GM12878 (cell line): ENCODE measurements at regions of chr6 and their contacts with region 1.

Region 1: GRCh38 chr6:43506667-43507471 is 3.3 kb downstream of the LRRC73 start:
- DNase-seq: peak; percentile 51
- ATAC-seq: peak; percentile 87
- H3K4me3 ChIP-seq: no peak overlapping the region
- H3K27ac ChIP-seq: no peak overlapping the region
- H3K4me1 ChIP-seq: peaks cover 4% of the 10 kb centered on the region; the same call in 1 of the 2 replicates
- H3K27me3 ChIP-seq: peaks cover 0 to 2% of the 10 kb centered on the region in 2 experiments; a peak in 1 of 4 replicates
- CTCF ChIP-seq: peak; percentile 91 to 97 (median 96); a peak in 5 of 6 replicates
- EP300 ChIP-seq: no peak
- POLR2A ChIP-seq: no peak
- RAD21 ChIP-seq: peak; percentile 80

Region 2: DNA sequence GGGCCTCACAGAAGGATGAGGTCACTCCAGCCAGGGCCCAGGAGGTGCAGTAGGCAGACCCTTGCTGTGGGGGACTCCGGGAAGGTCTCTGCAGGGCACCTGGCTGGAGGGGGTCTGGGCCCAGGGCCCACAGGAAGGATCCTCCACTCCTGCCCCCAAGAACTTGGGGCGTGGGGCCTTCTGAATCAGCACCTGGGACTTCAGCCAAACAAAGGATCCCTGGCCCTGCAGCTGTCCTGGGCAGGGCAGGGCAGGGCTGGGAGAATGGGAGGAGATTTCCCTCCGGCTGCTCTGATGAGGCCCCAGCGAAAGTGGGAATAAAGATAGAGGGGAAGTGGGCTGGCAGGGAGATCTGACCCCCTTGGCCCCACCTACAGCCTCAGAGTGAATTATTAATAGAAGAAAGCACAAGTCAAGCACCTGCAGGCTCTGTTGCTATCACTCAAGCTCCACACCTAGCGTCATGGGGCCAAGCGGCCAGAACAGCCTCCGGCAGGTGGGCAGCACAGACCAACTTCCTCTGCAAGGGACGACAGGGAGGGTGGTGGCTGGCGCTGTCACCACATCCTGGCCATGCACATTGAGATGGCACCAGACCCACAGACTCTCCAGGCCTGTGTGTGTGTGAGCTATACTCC is 1227.6 kb before region 1 on chr6:
- CTCF ChIA-PET with region 1: no interaction called
- POLR2A ChIA-PET with region 1: no interaction called
- RAD21 ChIA-PET with region 1: no interaction called
- SMC1A ChIA-PET with region 1: no interaction called
- in situ Hi-C with region 1: no loop called
- intact Hi-C with region 1: no loop called
- DNase-seq: no peak
- ATAC-seq: peak; percentile 54
- H3K4me3 ChIP-seq: no peak overlapping the region
- H3K27ac ChIP-seq: peak overlapping the region; percentile 11; the same call in 1 of the 2 replicates
- H3K4me1 ChIP-seq: peaks cover 16% of the 10 kb centered on the region
- H3K27me3 ChIP-seq: no peaks in the 10 kb centered on the region; a peak in 1 of 4 replicates
- CTCF ChIP-seq: no peak
- EP300 ChIP-seq: no peak
- POLR2A ChIP-seq: no peak
- RAD21 ChIP-seq: no peak

Region 3: DNA sequence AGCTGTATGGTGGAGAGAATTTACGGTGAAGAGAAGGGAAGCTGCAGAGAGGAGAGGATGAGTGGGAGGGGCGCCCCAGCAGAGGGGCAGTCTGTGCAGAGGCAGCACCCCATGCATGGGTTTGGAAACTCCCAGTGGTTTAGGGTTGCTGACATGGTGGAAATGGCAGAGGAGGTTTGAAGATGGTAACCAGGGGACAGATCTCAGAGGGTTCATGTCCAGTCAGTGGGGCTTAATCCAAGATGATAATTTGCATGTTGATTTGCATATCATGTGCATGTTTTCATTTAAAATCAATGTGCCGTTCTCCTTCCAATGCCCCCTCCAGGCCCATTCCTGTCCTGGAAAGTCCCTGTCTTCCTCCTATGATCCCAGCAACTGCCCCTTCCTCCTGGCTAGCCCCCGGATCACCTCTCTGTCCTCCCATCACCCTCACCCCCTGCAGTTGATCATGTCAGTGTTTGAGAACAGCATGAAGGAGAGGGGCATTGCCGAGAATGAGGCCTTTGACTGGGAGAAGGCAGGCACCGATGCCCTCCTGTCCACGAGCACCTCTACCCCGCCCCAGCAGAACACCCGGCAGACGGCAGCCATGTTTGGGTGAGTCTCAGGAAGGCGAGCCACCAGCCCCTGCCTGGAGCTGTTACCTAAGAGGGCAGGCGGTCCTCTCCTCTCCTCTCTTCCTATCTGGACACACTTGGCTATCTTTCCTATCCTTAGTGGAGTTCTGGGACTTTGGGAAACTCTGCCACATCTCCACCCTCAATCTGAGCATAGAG is 249.3 kb before region 1 on chr6:
- CTCF ChIA-PET with region 1: interaction called, 33 read pairs
- POLR2A ChIA-PET with region 1: interaction called, 3 read pairs
- RAD21 ChIA-PET with region 1: interaction called, 44 read pairs
- SMC1A ChIA-PET with region 1: interaction called, 16 read pairs
- in situ Hi-C with region 1: loop called (anchors 5 kb)
- intact Hi-C with region 1: no loop called
- DNase-seq: no peak
- ATAC-seq: peak; percentile 80
- H3K4me3 ChIP-seq: no peak overlapping the region
- H3K27ac ChIP-seq: no peak overlapping the region
- H3K4me1 ChIP-seq: peaks cover 5% of the 10 kb centered on the region
- H3K27me3 ChIP-seq: no peaks in the 10 kb centered on the region; a peak in 1 of 4 replicates
- CTCF ChIP-seq: no peak
- EP300 ChIP-seq: no peak
- POLR2A ChIP-seq: no peak
- RAD21 ChIP-seq: no peak

Region 4: DNA sequence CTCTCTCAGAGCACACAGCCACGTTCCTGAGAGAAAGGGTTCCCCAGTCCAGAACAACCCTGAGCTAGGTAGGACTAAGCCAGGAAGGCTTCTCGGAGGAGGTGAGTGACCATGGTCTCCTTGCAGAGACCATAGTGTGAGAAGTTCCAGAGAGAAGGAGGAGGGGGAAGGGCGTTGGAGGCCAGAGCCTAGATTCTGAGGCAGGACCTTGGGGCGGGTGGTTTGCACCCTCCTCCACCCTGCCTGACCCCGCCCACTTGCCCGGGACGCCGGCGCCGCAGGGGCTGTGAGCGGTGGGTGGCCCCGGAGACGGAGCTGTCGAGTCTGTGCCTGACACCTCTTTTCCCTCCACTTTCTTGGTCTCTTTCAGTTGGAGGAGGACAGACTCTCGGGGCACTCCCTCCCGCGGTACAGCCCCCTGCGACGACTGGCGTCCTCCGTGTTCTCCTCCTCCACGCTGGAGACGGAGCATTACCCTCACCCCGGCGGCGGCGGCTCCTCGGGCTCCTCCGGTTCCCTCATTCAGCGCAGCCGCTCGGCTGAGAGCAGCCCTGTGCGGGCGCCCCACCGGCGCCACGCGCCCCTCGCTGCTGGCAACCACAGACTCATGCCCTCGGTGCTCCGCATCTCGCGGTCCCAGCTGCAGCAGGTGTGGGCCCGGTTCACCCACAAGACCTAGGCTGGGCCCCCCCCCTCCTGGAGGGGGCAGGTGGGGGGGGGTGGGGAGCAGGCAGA is 237.4 kb before region 1 on chr6:
- CTCF ChIA-PET with region 1: interaction called, 33 read pairs
- POLR2A ChIA-PET with region 1: interaction called, 3 read pairs
- RAD21 ChIA-PET with region 1: interaction called, 44 read pairs
- SMC1A ChIA-PET with region 1: interaction called, 16 read pairs
- in situ Hi-C with region 1: no loop called
- intact Hi-C with region 1: no loop called
- DNase-seq: no peak
- ATAC-seq: peak; percentile 52
- H3K4me3 ChIP-seq: no peak overlapping the region
- H3K27ac ChIP-seq: no peak overlapping the region
- H3K4me1 ChIP-seq: peaks cover 19% of the 10 kb centered on the region
- H3K27me3 ChIP-seq: no peaks in the 10 kb centered on the region
- CTCF ChIP-seq: no peak
- EP300 ChIP-seq: no peak
- POLR2A ChIP-seq: no peak
- RAD21 ChIP-seq: no peak

Region 5: GRCh38 chr6:43361269-43361668 is 145.6 kb before region 1 on chr6:
- CTCF ChIA-PET with region 1: interaction called, 14 read pairs
- POLR2A ChIA-PET with region 1: no interaction called
- RAD21 ChIA-PET with region 1: interaction called, 4 read pairs
- SMC1A ChIA-PET with region 1: interaction called, 6 read pairs
- in situ Hi-C with region 1: no loop called
- intact Hi-C with region 1: no loop called
- DNase-seq: no peak
- ATAC-seq: peak; percentile 68
- H3K4me3 ChIP-seq: peak overlapping the region; percentile 24; the same call in 1 of the 2 replicates
- H3K27ac ChIP-seq: no peak overlapping the region
- H3K4me1 ChIP-seq: peaks cover 10% of the 10 kb centered on the region
- H3K27me3 ChIP-seq: no peaks in the 10 kb centered on the region
- CTCF ChIP-seq: peak in 1 of 3 experiments; percentile 17; a peak in 1 of 6 replicates
- EP300 ChIP-seq: no peak
- POLR2A ChIP-seq: no peak
- RAD21 ChIP-seq: peak; percentile 28; the same call in 1 of the 2 replicates

Region 6: DNA sequence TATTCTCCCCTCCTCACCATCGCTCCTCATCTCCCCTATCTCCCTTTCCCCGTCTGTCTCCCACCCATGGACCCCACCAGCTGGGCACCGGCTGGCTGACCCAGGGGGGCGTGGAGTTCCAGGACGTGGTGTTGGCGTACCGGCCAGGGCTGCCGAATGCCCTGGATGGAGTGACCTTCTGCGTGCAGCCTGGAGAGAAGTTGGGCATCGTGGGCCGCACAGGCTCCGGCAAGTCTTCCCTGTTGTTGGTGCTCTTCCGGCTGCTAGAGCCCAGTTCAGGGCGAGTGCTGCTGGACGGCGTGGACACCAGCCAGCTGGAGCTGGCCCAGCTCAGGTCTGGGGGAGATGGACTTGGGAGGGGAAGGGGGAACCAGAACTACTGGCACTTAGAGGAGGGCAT is 59.3 kb before region 1 on chr6:
- CTCF ChIA-PET with region 1: interaction called, 12 read pairs
- POLR2A ChIA-PET with region 1: no interaction called
- RAD21 ChIA-PET with region 1: no interaction called
- SMC1A ChIA-PET with region 1: interaction called, 3 read pairs
- in situ Hi-C with region 1: no loop called
- intact Hi-C with region 1: no loop called
- DNase-seq: no peak
- ATAC-seq: no peak
- H3K4me3 ChIP-seq: no peak overlapping the region
- H3K27ac ChIP-seq: no peak overlapping the region
- H3K4me1 ChIP-seq: no peaks in the 10 kb centered on the region
- H3K27me3 ChIP-seq: no peaks in the 10 kb centered on the region
- CTCF ChIP-seq: no peak
- EP300 ChIP-seq: no peak
- POLR2A ChIP-seq: no peak
- RAD21 ChIP-seq: no peak

Region 7: GRCh38 chr6:43477235-43478007 is 29.4 kb before region 1 on chr6 and contains the start of gene TJAP1:
- CTCF ChIA-PET with region 1: interaction called, 10 read pairs
- POLR2A ChIA-PET with region 1: interaction called, 3 read pairs
- RAD21 ChIA-PET with region 1: interaction called, 3 read pairs
- SMC1A ChIA-PET with region 1: interaction called, 4 read pairs
- in situ Hi-C with region 1: no loop called
- intact Hi-C with region 1: no loop called
- DNase-seq: peak; percentile 36
- ATAC-seq: peak; percentile 99
- H3K4me3 ChIP-seq: peak within 1 kb of the TSS; percentile 91
- H3K27ac ChIP-seq: peak within 1 kb of the TSS; percentile 41
- H3K4me1 ChIP-seq: peaks cover 4% of the 10 kb centered on the region
- H3K27me3 ChIP-seq: no peaks in the 10 kb centered on the region
- CTCF ChIP-seq: no peak
- EP300 ChIP-seq: no peak
- POLR2A ChIP-seq: peak; percentile 93
- RAD21 ChIP-seq: no peak
- polyA plus RNA-seq, gene TJAP1: 0.11 to 0.42 TPM

Region 8: DNA sequence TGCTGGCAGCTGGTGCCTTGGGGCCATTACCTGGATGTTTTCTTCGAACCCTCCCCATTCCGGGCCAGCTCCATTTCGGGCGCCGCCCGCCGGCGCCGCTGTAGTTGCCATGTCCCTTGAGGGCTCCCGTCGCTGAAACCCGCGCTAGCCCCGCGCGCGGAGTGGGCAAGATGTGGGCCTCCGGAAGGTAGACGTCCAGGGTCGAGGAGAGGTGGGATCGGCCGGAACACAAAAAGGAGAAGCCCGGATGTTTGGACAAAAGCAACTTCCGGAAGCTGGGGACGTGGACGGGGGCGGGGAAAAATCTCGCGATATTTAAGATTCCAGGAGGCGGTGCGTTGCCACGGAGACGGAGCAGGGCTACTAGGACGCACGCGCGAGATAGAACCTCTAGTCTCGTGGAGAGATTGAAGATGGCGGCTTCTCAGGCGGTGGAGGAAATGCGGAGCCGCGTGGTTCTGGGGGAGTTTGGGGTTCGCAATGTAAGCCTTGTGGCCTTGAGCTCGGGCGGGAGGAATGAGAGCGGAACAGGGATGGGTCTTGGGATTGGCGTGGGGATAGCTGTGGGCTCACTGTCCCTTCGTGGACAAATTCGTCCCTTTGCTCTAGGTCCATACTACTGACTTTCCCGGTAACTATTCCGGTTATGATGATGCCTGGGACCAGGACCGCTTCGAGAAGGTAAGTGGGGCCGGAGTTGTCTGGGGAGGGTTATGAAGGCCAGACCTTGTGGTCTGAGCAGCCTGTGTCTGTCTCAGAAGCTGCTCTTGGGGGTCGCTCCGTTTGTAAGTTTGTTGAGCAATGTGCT is 10.0 kb after region 1 on chr6 and contains the starts of genes POLR1C and YIPF3:
- CTCF ChIA-PET with region 1: interaction called, 28 read pairs
- POLR2A ChIA-PET with region 1: interaction called, 9 read pairs
- RAD21 ChIA-PET with region 1: interaction called, 3 read pairs
- SMC1A ChIA-PET with region 1: interaction called, 16 read pairs
- in situ Hi-C with region 1: no loop called
- intact Hi-C with region 1: no loop called
- DNase-seq: peak; percentile 95
- ATAC-seq: peak; percentile 95
- H3K4me3 ChIP-seq: peak within 1 kb of the TSS; percentile 80
- H3K27ac ChIP-seq: peak within 1 kb of the TSS; percentile 76
- H3K4me1 ChIP-seq: peaks cover 6% of the 10 kb centered on the region
- H3K27me3 ChIP-seq: no peaks in the 10 kb centered on the region
- CTCF ChIP-seq: no peak
- EP300 ChIP-seq: 0 out of 4 replicates have a peak, but pooled peaks of 1 of the 2 experiments have one; percentile 26
- POLR2A ChIP-seq: peak; percentile 96
- RAD21 ChIP-seq: no peak
- polyA plus RNA-seq, gene POLR1C: 164 to 180 TPM
- polyA plus RNA-seq, gene YIPF3: 25.0 to 29.8 TPM